ENCODE measurements at regions of chr1 and their contacts with region 1.

Region 1: DNA sequence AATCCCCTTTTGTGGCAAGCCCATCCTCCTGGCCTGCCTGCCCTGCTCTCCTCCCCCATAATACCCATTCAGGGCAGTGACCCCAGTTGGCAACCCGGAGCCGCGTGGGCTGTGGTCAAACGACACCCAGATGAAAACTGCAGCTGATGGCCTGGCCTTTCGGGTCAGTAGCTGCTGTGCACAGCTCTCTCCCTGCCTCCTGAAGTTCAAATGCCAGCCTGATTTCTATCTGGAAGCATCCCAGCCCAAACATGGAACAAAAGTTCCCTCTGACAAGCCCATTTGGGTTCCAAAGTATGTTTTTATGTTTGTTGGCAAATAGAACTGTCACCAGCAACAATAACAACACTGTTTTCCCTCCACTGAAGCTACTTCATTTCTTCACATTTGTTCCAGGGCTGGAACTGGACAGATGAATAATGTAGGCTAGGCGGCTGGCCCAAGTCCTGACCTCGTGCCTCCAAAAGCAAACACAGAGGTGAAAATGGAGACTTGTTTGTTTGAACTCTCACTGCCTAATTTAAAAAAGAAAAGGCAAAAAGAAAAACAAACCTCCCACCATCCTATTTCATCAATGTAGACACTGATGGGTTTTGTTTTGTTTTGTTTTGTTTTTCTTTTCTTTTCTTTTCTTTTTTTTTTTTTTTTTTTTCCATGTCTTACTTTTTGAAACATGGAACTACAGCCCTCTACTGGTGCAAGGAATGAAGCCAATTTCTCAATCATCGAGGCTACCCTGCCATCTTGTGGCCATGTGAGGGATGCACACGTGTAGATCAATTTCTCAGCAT is 179.0 kb downstream of the ADSS2 start:
- DNase-seq: peak; percentile 79
- H3K4me3 Mint-ChIP-seq: no peak overlapping the region
- H3K27ac Mint-ChIP-seq: peak overlapping the region; percentile 50
- H3K4me1 Mint-ChIP-seq: peaks cover 41% of the 10 kb centered on the region
- H3K27me3 Mint-ChIP-seq: no peaks in the 10 kb centered on the region
- CTCF ChIP-seq: peak; percentile 97

Region 2: DNA sequence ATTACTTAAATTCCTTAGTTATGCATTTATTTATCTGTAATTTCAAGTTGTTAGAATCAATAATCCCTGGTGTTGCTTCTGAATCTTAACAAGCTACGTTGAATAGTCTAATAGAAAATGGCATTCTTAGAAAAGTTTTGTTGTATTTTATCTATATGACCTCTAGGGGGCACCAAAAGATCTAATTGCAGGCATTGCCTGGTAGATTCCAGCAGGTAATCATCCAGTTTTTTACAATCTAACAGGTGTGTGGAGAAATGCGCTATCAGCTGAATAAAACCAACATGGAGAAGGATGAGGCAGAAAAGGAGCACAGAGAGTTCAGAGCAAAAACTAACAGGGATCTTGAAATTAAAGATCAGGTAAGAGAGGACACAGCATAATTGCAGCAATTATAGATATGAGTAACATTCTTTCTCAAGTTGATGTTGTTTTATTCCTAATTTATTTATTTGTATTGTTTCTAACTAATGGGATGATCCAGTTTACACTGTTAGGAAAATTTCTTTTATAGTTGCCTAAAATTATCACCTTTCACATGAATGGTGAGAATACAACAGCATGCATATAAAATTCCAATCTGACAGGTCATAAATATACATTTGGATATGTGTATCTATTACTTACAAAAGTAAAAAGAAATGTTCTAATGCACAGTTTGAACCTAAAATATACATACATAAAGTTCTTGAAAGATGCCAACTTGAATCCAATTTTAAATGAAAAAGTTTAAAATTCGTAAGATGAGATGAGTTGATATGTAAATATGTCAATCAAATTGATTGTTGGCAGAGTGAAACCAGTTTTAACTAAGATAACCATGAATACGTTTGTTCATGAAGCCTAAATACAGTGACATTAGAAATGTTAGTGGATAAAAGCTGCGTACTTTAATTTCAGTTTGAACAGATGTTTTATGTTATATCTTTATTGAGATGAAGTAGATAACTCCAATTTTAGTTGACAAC is 928.4 kb before region 1 on chr1:
- CTCF ChIA-PET with region 1: interaction called, 10 read pairs
- intact Hi-C with region 1: loop called (anchors 1 kb)
- DNase-seq: peak; percentile 6
- H3K4me3 Mint-ChIP-seq: no peak overlapping the region
- H3K27ac Mint-ChIP-seq: no peak overlapping the region
- H3K4me1 Mint-ChIP-seq: peaks cover 9% of the 10 kb centered on the region
- H3K27me3 Mint-ChIP-seq: no peaks in the 10 kb centered on the region
- CTCF ChIP-seq: peak; percentile 43

Region 3: DNA sequence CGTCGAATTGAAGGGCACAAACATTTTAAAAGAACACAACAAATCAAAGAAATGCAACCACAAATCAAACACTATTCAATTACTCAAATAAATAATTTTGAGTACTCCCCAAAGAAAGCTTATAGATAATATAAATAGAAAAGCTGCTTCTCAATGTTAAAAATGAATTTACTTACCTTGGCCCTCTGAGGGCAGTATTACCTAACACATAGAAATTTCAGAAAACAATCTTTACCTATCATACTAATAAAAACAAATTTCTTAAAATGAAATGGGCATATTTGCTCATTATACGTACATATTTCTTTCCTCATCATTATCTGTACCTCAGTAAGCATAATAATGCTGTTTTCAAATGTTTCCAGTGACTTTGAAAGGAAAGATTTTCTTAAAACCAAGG is 564.5 kb before region 1 on chr1:
- CTCF ChIA-PET with region 1: interaction called, 3 read pairs
- intact Hi-C with region 1: loop called (anchors 1 kb)
- DNase-seq: no peak
- H3K4me3 Mint-ChIP-seq: no peak overlapping the region
- H3K27ac Mint-ChIP-seq: no peak overlapping the region
- H3K4me1 Mint-ChIP-seq: peaks cover 17% of the 10 kb centered on the region
- H3K27me3 Mint-ChIP-seq: no peaks in the 10 kb centered on the region
- CTCF ChIP-seq: peak; percentile 53

Region 4: GRCh38 chr1:243850452-243851256 is 422.0 kb before region 1 on chr1:
- CTCF ChIA-PET with region 1: no interaction called
- intact Hi-C with region 1: loop called (anchors 5 kb)
- DNase-seq: peak; percentile 84
- H3K4me3 Mint-ChIP-seq: peak overlapping the region; percentile 96
- H3K27ac Mint-ChIP-seq: peak overlapping the region; percentile 84
- H3K4me1 Mint-ChIP-seq: peaks cover 24% of the 10 kb centered on the region
- H3K27me3 Mint-ChIP-seq: no peaks in the 10 kb centered on the region
- CTCF ChIP-seq: no peak

Region 5: DNA sequence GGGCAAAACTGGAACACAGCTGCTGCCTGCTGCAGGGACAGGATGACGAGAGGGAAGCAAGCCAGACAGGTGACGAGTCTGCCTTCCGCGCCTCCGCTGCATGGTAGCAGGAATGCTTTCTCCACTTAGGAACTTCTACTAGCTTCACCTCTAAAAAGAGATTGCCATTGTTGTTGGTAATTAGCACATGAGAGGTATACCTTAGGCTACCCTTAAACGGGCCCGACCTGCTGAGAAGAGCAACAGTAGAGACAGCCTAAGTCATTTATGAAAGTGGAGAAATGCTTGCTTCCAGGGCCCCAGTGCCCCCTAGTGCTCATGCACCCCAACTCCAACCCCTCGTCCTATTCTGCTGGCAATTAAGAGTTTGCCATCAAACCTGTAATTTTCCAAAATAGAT is 325.7 kb before region 1 on chr1:
- CTCF ChIA-PET with region 1: no interaction called
- intact Hi-C with region 1: loop called (anchors 5 kb)
- DNase-seq: peak; percentile 58
- H3K4me3 Mint-ChIP-seq: no peak overlapping the region
- H3K27ac Mint-ChIP-seq: no peak overlapping the region
- H3K4me1 Mint-ChIP-seq: peaks cover 25% of the 10 kb centered on the region
- H3K27me3 Mint-ChIP-seq: no peaks in the 10 kb centered on the region
- CTCF ChIP-seq: peak; percentile 59

Region 6: GRCh38 chr1:244047621-244048471 is 224.8 kb before region 1 on chr1:
- CTCF ChIA-PET with region 1: no interaction called
- intact Hi-C with region 1: loop called (anchors 5 kb)
- DNase-seq: peak; percentile 98
- H3K4me3 Mint-ChIP-seq: peak overlapping the region; percentile 86
- H3K27ac Mint-ChIP-seq: peak overlapping the region; percentile 86
- H3K4me1 Mint-ChIP-seq: peaks cover 12% of the 10 kb centered on the region
- H3K27me3 Mint-ChIP-seq: no peaks in the 10 kb centered on the region
- CTCF ChIP-seq: no peak

Region 7: GRCh38 chr1:244180256-244180655 is 92.4 kb before region 1 on chr1:
- CTCF ChIA-PET with region 1: interaction called, 11 read pairs
- intact Hi-C with region 1: no loop called
- DNase-seq: no peak
- H3K4me3 Mint-ChIP-seq: no peak overlapping the region
- H3K27ac Mint-ChIP-seq: no peak overlapping the region
- H3K4me1 Mint-ChIP-seq: no peaks in the 10 kb centered on the region
- H3K27me3 Mint-ChIP-seq: no peaks in the 10 kb centered on the region
- CTCF ChIP-seq: no peak

Region 8: DNA sequence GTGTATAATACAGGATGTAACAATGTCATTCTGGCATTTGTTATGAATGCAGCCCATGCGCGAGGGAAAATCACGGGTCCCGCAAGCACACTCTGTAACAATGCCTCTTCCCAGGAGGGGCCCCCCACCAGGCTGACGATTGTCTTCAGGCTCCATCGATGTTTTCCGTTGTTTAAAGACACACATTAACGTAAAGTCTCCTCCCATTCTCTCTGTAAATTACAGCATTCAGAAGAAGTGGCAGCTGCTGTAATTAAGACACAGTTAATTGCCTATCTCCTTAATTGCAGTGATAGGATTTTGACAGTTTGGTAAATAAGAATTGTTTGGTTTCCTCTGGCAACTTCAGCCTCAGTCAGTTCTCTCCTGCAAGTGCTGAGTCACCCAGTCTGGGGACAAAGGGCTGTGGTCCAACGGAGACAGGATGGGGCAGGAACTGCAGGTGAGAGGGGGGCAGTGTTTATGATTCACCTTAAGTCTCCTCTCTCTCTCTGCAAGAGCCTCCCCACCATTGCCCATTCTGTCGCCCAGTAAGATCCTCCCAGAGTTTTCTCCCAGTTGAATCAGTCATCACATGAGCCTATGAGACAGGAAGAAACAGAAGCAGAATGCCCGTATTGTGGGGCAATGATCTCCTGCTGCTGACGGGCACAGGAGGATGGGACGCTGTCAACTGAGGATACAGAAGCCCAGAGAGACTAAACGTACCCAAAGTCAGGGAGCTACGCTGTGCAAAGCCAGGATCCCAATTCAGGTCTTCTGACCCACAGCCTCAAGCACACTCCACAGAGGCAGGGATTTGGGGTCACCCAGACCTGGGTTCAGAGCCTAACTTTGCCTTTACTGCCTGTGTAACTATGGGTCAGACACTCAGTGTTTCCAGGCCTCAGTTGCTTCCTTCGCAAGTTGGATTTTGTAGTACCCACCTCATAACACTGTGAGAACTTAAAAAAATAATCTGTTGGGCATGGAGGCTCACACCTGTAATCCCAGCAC is 69.1 kb after region 1 on chr1:
- CTCF ChIA-PET with region 1: no interaction called
- intact Hi-C with region 1: no loop called
- DNase-seq: peak; percentile 80
- H3K4me3 Mint-ChIP-seq: peak overlapping the region; percentile 48
- H3K27ac Mint-ChIP-seq: peak overlapping the region; percentile 90
- H3K4me1 Mint-ChIP-seq: peaks cover 25% of the 10 kb centered on the region
- H3K27me3 Mint-ChIP-seq: no peaks in the 10 kb centered on the region
- CTCF ChIP-seq: no peak

Region 9: DNA sequence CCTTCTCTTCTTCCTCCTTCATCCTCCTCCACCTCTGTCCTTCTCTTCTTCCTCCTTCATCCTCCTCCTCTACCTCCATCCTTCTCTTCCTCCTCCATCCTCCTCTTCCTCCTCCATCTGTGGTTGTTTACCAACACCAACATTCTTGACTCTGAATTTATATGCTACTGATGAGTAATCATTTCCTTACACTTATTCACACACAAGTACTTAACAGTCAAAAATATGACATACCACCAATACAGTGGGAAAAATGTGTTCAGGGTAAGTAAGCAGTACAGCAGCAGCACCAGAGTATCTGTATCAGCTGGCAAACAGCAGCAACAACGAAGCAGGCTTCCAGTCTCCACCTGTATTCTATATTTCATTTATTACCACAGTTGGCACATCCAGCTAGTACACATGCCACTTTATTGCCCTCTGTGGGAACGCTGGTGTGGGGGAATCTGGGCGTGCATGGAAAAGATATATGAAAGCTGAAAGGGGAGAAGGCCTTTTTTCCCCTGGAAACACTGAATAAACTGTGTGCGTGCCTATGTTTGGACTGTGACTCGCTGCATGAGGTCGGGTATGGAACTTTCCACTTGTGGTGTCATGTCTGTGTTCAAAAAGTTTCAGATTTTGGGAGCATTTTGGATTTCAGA is 163.0 kb after region 1 on chr1:
- CTCF ChIA-PET with region 1: no interaction called
- intact Hi-C with region 1: no loop called
- DNase-seq: no peak
- H3K4me3 Mint-ChIP-seq: peak overlapping the region; percentile 40
- H3K27ac Mint-ChIP-seq: peak overlapping the region; percentile 52
- H3K4me1 Mint-ChIP-seq: peaks cover 64% of the 10 kb centered on the region
- H3K27me3 Mint-ChIP-seq: no peaks in the 10 kb centered on the region
- CTCF ChIP-seq: no peak

Region 10: GRCh38 chr1:244672946-244673682 is 400.4 kb after region 1 on chr1:
- CTCF ChIA-PET with region 1: no interaction called
- intact Hi-C with region 1: no loop called
- DNase-seq: no peak
- H3K4me3 Mint-ChIP-seq: no peak overlapping the region
- H3K27ac Mint-ChIP-seq: no peak overlapping the region
- H3K4me1 Mint-ChIP-seq: no peaks in the 10 kb centered on the region
- H3K27me3 Mint-ChIP-seq: no peaks in the 10 kb centered on the region
- CTCF ChIP-seq: no peak